IMR-90 (cell line): ENCODE measurements at regions of chr22 and their contacts with region 1.

Region 1: GRCh38 chr22:29740216-29740615 is 20.4 kb downstream of the CABP7 start:
- DNase-seq: no peak
- ATAC-seq: no peak
- H3K4me3 ChIP-seq: no peak overlapping the region
- H3K27ac ChIP-seq: no peak overlapping the region
- H3K4me1 ChIP-seq: peaks cover 4% of the 10 kb centered on the region; the same call in 1 of the 2 replicates
- H3K27me3 ChIP-seq: no peaks in the 10 kb centered on the region
- CTCF ChIP-seq: no peak
- POLR2A ChIP-seq: no peak
- RAD21 ChIP-seq: no peak

Region 2: DNA sequence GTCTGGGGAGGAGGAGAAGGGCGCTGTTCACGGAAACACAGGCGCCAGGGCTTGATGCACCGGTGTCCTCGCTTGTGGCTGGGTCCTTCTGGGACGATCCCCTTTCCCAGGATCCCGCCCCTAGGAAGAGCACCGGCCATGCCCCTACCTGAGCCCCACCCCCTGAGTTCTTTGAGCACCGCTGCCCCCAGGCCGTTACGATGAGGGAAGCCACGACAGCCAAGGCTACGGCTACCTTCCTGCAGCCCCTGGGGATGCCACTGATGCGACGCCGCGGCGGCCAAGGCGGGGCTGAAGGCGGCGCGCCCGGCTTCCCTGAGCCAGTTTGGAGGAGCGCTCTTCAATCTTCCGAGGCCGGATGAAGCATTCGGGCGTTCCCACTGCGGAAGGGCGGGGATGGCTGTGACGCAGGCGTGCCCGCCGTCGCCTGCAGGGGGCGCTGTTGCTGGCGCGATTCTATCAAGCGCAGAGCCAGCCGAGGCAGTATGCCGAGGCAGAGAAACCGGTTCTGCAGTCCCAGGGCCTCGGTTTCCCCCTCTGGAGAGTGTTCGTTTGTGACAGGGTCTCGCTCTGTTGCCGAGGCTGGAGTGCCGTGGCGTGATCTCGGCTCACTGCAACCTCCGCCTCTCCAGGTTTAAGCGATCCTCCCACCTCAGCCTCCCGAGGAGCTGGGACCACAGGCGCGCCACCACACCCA is 269.9 kb before region 1 on chr22:
- CTCF ChIA-PET with region 1: no interaction called
- POLR2A ChIA-PET with region 1: no interaction called
- dilution Hi-C with region 1: no loop called
- in situ Hi-C with region 1: no loop called
- intact Hi-C with region 1: no loop called
- DNase-seq: peak; percentile 24
- ATAC-seq: peak; percentile 71
- H3K4me3 ChIP-seq: peak overlapping the region; percentile 37
- H3K27ac ChIP-seq: no peak overlapping the region
- H3K4me1 ChIP-seq: no peaks in the 10 kb centered on the region; the same call in 1 of the 2 replicates
- H3K27me3 ChIP-seq: peaks cover 44% of the 10 kb centered on the region
- CTCF ChIP-seq: peak; percentile 74
- POLR2A ChIP-seq: no peak
- RAD21 ChIP-seq: peak; percentile 49

Region 3: GRCh38 chr22:29827091-29827490 is 86.9 kb after region 1 on chr22:
- CTCF ChIA-PET with region 1: no interaction called
- POLR2A ChIA-PET with region 1: interaction called, 10 read pairs
- dilution Hi-C with region 1: no loop called
- in situ Hi-C with region 1: no loop called
- intact Hi-C with region 1: no loop called
- DNase-seq: no peak
- ATAC-seq: no peak
- H3K4me3 ChIP-seq: no peak overlapping the region
- H3K27ac ChIP-seq: no peak overlapping the region
- H3K4me1 ChIP-seq: peaks cover 1% of the 10 kb centered on the region; the same call in 1 of the 2 replicates
- H3K27me3 ChIP-seq: no peaks in the 10 kb centered on the region
- CTCF ChIP-seq: no peak
- POLR2A ChIP-seq: no peak
- RAD21 ChIP-seq: no peak

Region 4: DNA sequence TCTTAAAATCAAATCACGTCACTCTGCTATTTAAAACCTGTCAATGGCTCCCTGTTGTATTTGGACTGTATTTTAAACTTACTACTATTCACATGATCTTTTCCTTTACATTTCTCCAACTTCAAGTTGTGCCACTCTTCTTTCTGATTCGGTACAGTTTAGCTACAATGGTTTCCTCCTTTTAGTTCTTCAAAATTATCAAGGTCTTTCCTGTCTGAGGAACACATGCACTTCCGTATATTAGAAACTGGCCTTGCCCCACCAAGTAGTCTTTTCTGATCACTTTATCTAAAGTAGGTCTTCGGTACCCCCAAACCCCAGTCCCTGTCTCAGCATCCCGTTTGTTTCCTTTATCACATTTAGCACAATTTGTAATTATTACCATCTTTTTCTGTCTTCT is 224.6 kb after region 1 on chr22:
- CTCF ChIA-PET with region 1: no interaction called
- POLR2A ChIA-PET with region 1: no interaction called
- dilution Hi-C with region 1: no loop called
- in situ Hi-C with region 1: no loop called
- intact Hi-C with region 1: no loop called
- DNase-seq: no peak
- ATAC-seq: no peak
- H3K4me3 ChIP-seq: no peak overlapping the region
- H3K27ac ChIP-seq: no peak overlapping the region
- H3K4me1 ChIP-seq: peaks cover 3% of the 10 kb centered on the region
- H3K27me3 ChIP-seq: no peaks in the 10 kb centered on the region
- CTCF ChIP-seq: no peak
- POLR2A ChIP-seq: no peak
- RAD21 ChIP-seq: no peak